Natural killer cell (primary cell): ENCODE measurements at regions of chr6 and their contacts with region 1.

Region 1: DNA sequence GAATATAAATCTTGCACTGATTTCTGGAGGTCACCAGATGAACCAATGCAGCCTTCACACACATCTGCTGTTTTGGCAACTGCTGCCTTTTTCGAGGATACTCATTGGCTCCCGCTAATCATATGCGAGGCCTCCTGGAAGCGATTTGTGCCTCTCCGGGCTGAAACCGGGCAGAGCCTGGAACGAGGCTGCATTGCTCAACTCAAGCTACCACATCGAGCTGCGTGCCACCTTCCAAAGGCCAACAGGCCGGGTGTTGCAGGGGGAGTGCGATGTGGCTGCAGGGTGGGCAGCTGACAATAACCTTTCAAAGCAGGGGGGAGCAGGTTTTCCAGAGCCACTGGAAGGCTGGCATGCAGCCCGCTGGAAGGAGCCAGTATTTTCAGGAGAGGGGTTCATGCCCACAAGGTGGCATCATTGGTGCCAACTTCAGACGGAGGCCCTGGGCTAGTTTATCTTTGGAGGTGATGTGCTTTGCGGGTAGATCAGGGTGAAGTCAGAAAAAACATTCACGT is 122.6 kb upstream of the IFNGR1 start:
- DNase-seq: peak in 1 of 2 donors; percentile 80
- ATAC-seq: peak; percentile 59 to 88 (median 69)
- H3K4me3 ChIP-seq: no peak overlapping the region
- H3K4me3 Mint-ChIP-seq: peak overlapping the region; percentile 86
- H3K27ac ChIP-seq: no peak overlapping the region
- H3K27ac Mint-ChIP-seq: peak overlapping the region; percentile 79 to 83
- H3K4me1 ChIP-seq: peaks cover 14% of the 10 kb centered on the region
- H3K4me1 Mint-ChIP-seq: peaks cover 28 to 41% of the 10 kb centered on the region in 2 donors
- H3K27me3 ChIP-seq: no peaks in the 10 kb centered on the region
- H3K27me3 Mint-ChIP-seq: no peaks in the 10 kb centered on the region
- CTCF ChIP-seq: no peak

Region 2: GRCh38 chr6:136737871-136738691 is 603.7 kb before region 1 on chr6:
- intact Hi-C with region 1: no loop called
- DNase-seq: no peak
- ATAC-seq: no peak
- H3K4me3 ChIP-seq: no peak overlapping the region
- H3K4me3 Mint-ChIP-seq: no peak overlapping the region
- H3K27ac ChIP-seq: no peak overlapping the region
- H3K27ac Mint-ChIP-seq: no peak overlapping the region
- H3K4me1 ChIP-seq: peaks cover 3% of the 10 kb centered on the region
- H3K4me1 Mint-ChIP-seq: peaks cover 36 to 51% of the 10 kb centered on the region in 2 donors
- H3K27me3 ChIP-seq: no peaks in the 10 kb centered on the region
- H3K27me3 Mint-ChIP-seq: no peaks in the 10 kb centered on the region
- CTCF ChIP-seq: no peak

Region 3: DNA sequence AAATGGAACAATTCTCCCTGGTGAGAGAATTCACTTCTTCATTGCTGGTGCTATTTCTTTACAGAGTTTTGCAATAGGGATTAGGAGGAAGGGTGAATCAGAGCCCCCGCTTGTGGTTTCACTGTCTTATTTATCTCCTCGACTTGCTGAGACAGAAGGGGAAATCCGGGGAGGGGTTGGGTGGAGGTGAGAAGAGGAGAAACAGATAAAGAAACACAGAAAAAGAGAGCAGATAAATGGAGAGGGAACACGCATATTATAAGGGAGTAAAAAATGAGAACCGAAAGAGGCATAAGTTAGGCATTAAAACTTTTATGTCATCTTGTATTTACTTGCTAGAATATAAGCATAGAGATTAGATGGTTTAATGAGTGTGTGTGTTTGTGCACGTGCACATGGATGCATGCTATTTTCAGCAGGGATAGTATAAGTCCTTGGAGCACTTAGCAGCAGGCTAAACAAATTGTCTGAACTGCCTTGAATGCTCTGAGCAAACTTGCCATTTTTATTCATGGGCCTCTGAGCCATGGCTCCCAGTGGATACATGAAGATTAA is 47.5 kb after region 1 on chr6:
- intact Hi-C with region 1: loop called (anchors 2 kb)
- DNase-seq: peak; percentile 50 to 87
- ATAC-seq: peak; percentile 92 to 98 (median 93)
- H3K4me3 ChIP-seq: no peak overlapping the region
- H3K4me3 Mint-ChIP-seq: peak overlapping the region; percentile 78
- H3K27ac ChIP-seq: peak overlapping the region; percentile 82
- H3K27ac Mint-ChIP-seq: peak overlapping the region; percentile 83 to 87
- H3K4me1 ChIP-seq: peaks cover 45% of the 10 kb centered on the region
- H3K4me1 Mint-ChIP-seq: peaks cover 92 to 94% of the 10 kb centered on the region in 2 donors
- H3K27me3 ChIP-seq: no peaks in the 10 kb centered on the region
- H3K27me3 Mint-ChIP-seq: no peaks in the 10 kb centered on the region
- CTCF ChIP-seq: no peak

Region 4: GRCh38 chr6:137415127-137415833 is 73.5 kb after region 1 on chr6:
- intact Hi-C with region 1: loop called (anchors 1 kb)
- DNase-seq: peak; percentile 50 to 85
- ATAC-seq: peak; percentile 90 to 93 (median 91)
- H3K4me3 ChIP-seq: peak overlapping the region; percentile 41
- H3K4me3 Mint-ChIP-seq: peak overlapping the region; percentile 93
- H3K27ac ChIP-seq: peak overlapping the region; percentile 87
- H3K27ac Mint-ChIP-seq: peak overlapping the region; percentile 94 to 98
- H3K4me1 ChIP-seq: peaks cover 16% of the 10 kb centered on the region
- H3K4me1 Mint-ChIP-seq: peaks cover 20 to 21% of the 10 kb centered on the region in 2 donors
- H3K27me3 ChIP-seq: no peaks in the 10 kb centered on the region
- H3K27me3 Mint-ChIP-seq: no peaks in the 10 kb centered on the region
- CTCF ChIP-seq: peak; percentile 74